Kidney (tissue), 22 donors: ENCODE measurements at regions of chr17 and their contacts with region 1.

Region 1: GRCh38 chr17:77247048-77247541 is 106.3 kb downstream of the SEC14L1 start:
- DNase-seq: peak; percentile 90 to 95 (median 93)
- H3K4me3 ChIP-seq: peak overlapping the region; percentile 26 to 46 (median 28)
- H3K27ac ChIP-seq: no peak overlapping the region
- H3K4me1 ChIP-seq: peaks cover 0 to 8% (median 3%) of the 10 kb centered on the region in 3 donors
- H3K27me3 ChIP-seq: no peaks in the 10 kb centered on the region
- CTCF ChIP-seq: peak; percentile 86

Region 2: GRCh38 chr17:77088455-77089123 is 158.5 kb before region 1 on chr17:
- intact Hi-C with region 1: loop called (anchors 5 kb)
- DNase-seq: peak; percentile 96 to 99 (median 97)
- H3K4me3 ChIP-seq: peak overlapping the region; percentile 80 to 98 (median 83)
- H3K27ac ChIP-seq: peak overlapping the region; percentile 84 to 87
- H3K4me1 ChIP-seq: peaks cover 0 to 21% (median 12%) of the 10 kb centered on the region in 3 donors
- H3K27me3 ChIP-seq: no peaks in the 10 kb centered on the region
- CTCF ChIP-seq: peak; percentile 70

Region 3: GRCh38 chr17:77131904-77132303 is 115.2 kb before region 1 on chr17:
- intact Hi-C with region 1: no loop called
- DNase-seq: peak in 3 of 5 donors; percentile 13 to 45 (median 35)
- H3K4me3 ChIP-seq: no peak overlapping the region
- H3K27ac ChIP-seq: peak overlapping the region in 1 of 2 donors; percentile 29
- H3K4me1 ChIP-seq: peaks cover 5 to 17% (median 9%) of the 10 kb centered on the region in 3 donors
- H3K27me3 ChIP-seq: no peaks in the 10 kb centered on the region
- CTCF ChIP-seq: no peak

Region 4: GRCh38 chr17:77372444-77373298 is 125.6 kb after region 1 on chr17:
- intact Hi-C with region 1: no loop called
- DNase-seq: peak; percentile 93 to 96 (median 96)
- H3K4me3 ChIP-seq: peak overlapping the region; percentile 9 to 76 (median 22)
- H3K27ac ChIP-seq: peak overlapping the region; percentile 49 to 80
- H3K4me1 ChIP-seq: peaks cover 6 to 48% (median 28%) of the 10 kb centered on the region in 3 donors
- H3K27me3 ChIP-seq: no peaks in the 10 kb centered on the region
- CTCF ChIP-seq: no peak